Right cardiac atrium (tissue), 5 donors: ENCODE measurements at regions of chr22 and their contacts with region 1.

Region 1: DNA sequence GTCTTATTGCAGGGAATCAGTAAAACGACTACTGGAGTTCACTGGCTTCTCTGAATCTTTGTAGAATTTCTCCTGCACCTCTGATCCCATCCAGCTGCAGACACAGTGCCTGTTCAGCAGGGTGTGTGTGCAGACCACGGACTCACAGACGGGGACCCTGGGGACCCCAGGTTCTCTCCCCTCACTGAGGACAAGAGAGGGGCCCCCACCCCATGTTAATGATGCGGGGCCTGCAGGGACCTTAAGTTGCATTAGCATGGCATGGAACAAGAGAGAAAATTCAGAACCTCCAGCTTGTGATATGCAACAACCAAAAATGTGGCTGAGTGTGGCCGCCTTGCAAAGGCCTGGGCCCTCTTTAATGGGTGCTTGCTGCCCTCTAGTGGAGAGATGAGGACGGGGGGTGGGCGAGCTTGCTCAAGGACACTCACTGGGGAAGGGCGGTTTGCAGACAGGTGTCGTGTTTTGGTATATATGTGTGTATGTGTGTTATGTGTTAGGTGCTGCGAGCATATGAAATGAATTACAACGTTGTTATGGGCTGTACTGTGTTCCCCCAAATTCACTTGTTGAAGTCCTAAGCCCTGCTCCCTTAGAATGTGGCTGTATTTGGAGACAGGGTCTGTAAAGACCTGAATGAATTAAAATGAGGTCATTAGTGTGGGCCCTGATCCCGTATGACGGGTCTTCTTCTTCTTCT is 84.4 kb upstream of the SEPTIN5 start:
- DNase-seq: peak; percentile 69 to 88 (median 86)
- ATAC-seq: peak; percentile 76 to 88
- H3K4me3 ChIP-seq: no peak overlapping the region
- H3K27ac ChIP-seq: no peak overlapping the region
- H3K4me1 ChIP-seq: no peaks in the 10 kb centered on the region
- H3K27me3 ChIP-seq: no peaks in the 10 kb centered on the region

Region 2: DNA sequence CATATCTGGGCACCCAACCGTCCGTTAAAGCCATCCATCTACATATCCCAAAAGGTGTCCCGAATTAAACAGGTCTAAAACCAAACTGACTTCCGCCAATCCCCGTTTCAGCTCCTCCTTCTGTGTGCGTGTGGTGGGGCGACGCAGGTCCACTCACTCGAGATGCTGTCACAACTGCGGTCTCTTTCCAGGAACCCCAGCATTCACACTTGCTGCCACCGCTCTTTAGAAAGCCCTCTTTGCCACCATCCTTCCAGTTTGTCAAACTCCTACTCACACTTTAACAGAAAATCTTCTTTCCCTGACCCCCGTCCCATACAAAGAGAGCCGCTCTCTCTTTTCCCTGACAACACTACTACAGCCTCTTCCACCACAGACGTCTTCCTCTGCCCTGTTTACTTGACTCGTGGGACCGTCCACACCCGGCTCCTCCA is 485.9 kb before region 1 on chr22:
- intact Hi-C with region 1: loop called in 1 of 4 experiments (anchors 10 kb)
- DNase-seq: no peak
- ATAC-seq: no peak
- H3K4me3 ChIP-seq: peak overlapping the region; percentile 62
- H3K27ac ChIP-seq: peak overlapping the region; percentile 59
- H3K4me1 ChIP-seq: no peaks in the 10 kb centered on the region
- H3K27me3 ChIP-seq: no peaks in the 10 kb centered on the region

Region 3: GRCh38 chr22:19149991-19150390 is 479.9 kb before region 1 on chr22 and contains the start of gene GSC2:
- intact Hi-C with region 1: loop called in 2 of 4 experiments (anchors 10 kb)
- DNase-seq: no peak
- ATAC-seq: no peak
- H3K4me3 ChIP-seq: peak within 1 kb of the TSS; percentile 12
- H3K27ac ChIP-seq: no peak within 1 kb of the TSS
- H3K4me1 ChIP-seq: no peaks in the 10 kb centered on the region
- H3K27me3 ChIP-seq: no peaks in the 10 kb centered on the region
- total RNA-seq, gene GSC2: not detected

Region 4: GRCh38 chr22:19495562-19496323 is 134.1 kb before region 1 on chr22:
- intact Hi-C with region 1: loop called (anchors 5 to 10 kb)
- DNase-seq: no peak
- ATAC-seq: no peak
- H3K4me3 ChIP-seq: no peak overlapping the region
- H3K27ac ChIP-seq: no peak overlapping the region
- H3K4me1 ChIP-seq: no peaks in the 10 kb centered on the region
- H3K27me3 ChIP-seq: no peaks in the 10 kb centered on the region

Region 5: DNA sequence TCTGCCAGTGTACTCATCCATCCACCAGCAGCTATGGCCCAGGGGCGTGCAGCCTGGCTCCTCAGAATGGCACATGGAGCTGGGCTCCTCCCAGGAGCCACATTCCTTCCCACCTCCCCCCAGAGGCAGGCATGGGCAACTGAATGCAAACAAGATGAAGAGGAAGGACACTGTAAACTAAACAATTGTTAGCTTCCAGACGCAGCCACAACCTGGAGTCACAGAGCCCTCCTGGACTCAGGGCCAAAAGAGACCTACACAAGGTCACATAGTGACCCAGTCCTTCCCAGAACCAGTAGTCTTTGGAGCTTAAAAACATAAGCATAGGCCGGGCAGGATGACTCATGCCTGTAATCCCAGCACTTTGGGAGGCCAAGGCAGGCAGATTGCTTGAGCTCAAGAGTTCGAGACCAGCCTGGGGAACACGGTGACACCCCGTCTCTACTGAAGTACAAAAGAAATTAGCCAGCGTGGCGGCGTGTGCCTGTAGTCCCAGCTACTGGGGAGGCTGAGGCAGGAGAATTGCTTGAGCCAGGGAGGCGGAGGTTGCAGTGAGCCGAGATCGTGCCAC is 75.0 kb before region 1 on chr22:
- intact Hi-C with region 1: loop called in 1 of 4 experiments (anchors 10 kb)
- DNase-seq: no peak
- ATAC-seq: no peak
- H3K4me3 ChIP-seq: no peak overlapping the region
- H3K27ac ChIP-seq: no peak overlapping the region
- H3K4me1 ChIP-seq: no peaks in the 10 kb centered on the region
- H3K27me3 ChIP-seq: no peaks in the 10 kb centered on the region